Transverse colon (tissue), 4 donors: ENCODE measurements at regions of chr5 and their contacts with region 1.

Region 1: GRCh38 chr5:36552626-36553393 is 53.6 kb upstream of the SLC1A3 start:
- DNase-seq: no peak
- H3K4me3 ChIP-seq: no peak overlapping the region
- H3K27ac ChIP-seq: no peak overlapping the region
- H3K4me1 ChIP-seq: no peaks in the 10 kb centered on the region
- H3K27me3 ChIP-seq: no peaks in the 10 kb centered on the region
- CTCF ChIP-seq: no peak
- EP300 ChIP-seq: no peak
- POLR2A ChIP-seq: no peak

Region 2: GRCh38 chr5:35230038-35230631 is 1322.7 kb before region 1 on chr5 and contains the start of gene PRLR:
- in situ Hi-C with region 1: no loop called
- intact Hi-C with region 1: loop called (anchors 5 kb)
- DNase-seq: peak; percentile 62
- H3K4me3 ChIP-seq: peak within 1 kb of the TSS; percentile 42 to 56 (median 52)
- H3K27ac ChIP-seq: peak within 1 kb of the TSS; percentile 74 to 86 (median 80)
- H3K4me1 ChIP-seq: peaks cover 3 to 18% (median 10%) of the 10 kb centered on the region in 4 donors
- H3K27me3 ChIP-seq: peaks cover 16% of the 10 kb centered on the region
- CTCF ChIP-seq: no peak
- EP300 ChIP-seq: no peak
- POLR2A ChIP-seq: peak; percentile 56
- total RNA-seq, gene PRLR: 4.9 to 19.8 (median 13.0) TPM

Region 3: DNA sequence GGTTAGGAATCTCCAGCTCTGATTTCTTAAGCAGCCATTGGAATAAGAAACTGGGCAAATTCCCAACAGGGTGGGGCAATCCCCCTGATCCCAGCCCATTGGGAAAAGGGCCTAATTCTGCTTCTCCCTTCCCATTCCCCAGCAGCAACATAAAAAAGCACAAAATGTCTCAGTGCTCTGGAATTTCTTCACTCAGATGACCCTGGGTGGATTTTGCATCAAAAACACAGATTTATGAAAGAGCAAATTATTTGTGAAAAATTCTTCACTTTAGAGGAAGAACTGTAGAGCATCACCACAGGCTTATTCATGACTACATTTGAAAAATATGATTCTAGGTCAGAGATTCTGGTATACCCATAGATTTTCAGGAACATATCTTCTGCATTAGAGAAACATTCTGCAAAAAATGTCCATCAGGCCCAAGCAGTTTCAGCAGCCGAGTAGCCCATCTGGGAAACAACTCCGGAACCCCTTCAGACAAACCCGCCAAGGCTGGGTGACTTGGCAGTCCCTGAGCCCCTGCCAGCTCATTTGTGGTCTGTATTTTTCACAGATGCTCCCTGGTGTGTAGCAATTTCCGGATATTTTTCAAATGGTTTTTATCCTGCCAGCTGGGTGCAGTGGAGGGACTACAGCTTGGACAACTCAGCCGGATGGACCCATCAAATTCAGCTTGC is 149.0 kb before region 1 on chr5:
- in situ Hi-C with region 1: no loop called
- intact Hi-C with region 1: no loop called
- DNase-seq: no peak
- H3K4me3 ChIP-seq: no peak overlapping the region
- H3K27ac ChIP-seq: peak overlapping the region in 2 of 4 donors; percentile 11 to 16
- H3K4me1 ChIP-seq: no peaks in the 10 kb centered on the region
- H3K27me3 ChIP-seq: no peaks in the 10 kb centered on the region
- CTCF ChIP-seq: no peak
- EP300 ChIP-seq: no peak
- POLR2A ChIP-seq: no peak

Region 4: DNA sequence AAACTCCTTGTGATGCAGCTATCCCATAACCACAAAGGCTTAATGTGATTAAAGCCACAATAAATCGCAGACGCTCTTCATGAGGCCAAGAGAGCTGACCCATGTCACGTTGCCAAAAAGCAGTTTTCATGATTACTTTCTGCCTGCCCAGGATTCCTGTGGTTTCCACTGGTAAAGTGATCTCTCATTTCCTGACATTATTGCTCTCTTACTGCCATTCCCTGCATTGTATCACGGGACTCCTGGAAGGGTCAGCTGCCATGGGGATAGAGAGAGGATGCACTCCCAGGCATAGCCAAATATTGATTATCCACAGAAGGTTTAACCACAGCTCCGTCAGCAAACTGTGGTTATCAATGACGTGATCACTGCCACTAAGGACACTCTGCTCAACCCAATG is 50.2 kb before region 1 on chr5:
- in situ Hi-C with region 1: no loop called
- intact Hi-C with region 1: no loop called
- DNase-seq: no peak
- H3K4me3 ChIP-seq: no peak overlapping the region
- H3K27ac ChIP-seq: no peak overlapping the region
- H3K4me1 ChIP-seq: no peaks in the 10 kb centered on the region
- H3K27me3 ChIP-seq: no peaks in the 10 kb centered on the region
- CTCF ChIP-seq: no peak
- EP300 ChIP-seq: no peak
- POLR2A ChIP-seq: no peak